ENCODE measurements at regions of chr10 and their contacts with region 1.

Region 1: GRCh38 chr10:126904819-126905686 is at the start of gene DOCK1:
- DNase-seq: no peak
- H3K4me3 ChIP-seq: peak within 1 kb of the TSS; percentile 92 to 96 (median 92)
- H3K27ac ChIP-seq: peak within 1 kb of the TSS; percentile 90 to 93 (median 92)
- H3K4me1 ChIP-seq: peaks cover 8 to 54% (median 22%) of the 10 kb centered on the region in 3 donors
- H3K27me3 ChIP-seq: no peaks in the 10 kb centered on the region
- CTCF ChIP-seq: no peak
- POLR2A ChIP-seq: peak in 3 of 4 donors; percentile 15 to 44 (median 16)
- total RNA-seq, gene DOCK1: 31.8 to 83.4 (median 49.8) TPM

Region 2: GRCh38 chr10:126749015-126749655 is 155.9 kb before region 1 on chr10:
- intact Hi-C with region 1: no loop called
- DNase-seq: no peak
- H3K4me3 ChIP-seq: no peak overlapping the region
- H3K27ac ChIP-seq: no peak overlapping the region
- H3K4me1 ChIP-seq: no peaks in the 10 kb centered on the region
- H3K27me3 ChIP-seq: no peaks in the 10 kb centered on the region
- CTCF ChIP-seq: peak; percentile 61 to 76 (median 69)
- POLR2A ChIP-seq: no peak

Region 3: DNA sequence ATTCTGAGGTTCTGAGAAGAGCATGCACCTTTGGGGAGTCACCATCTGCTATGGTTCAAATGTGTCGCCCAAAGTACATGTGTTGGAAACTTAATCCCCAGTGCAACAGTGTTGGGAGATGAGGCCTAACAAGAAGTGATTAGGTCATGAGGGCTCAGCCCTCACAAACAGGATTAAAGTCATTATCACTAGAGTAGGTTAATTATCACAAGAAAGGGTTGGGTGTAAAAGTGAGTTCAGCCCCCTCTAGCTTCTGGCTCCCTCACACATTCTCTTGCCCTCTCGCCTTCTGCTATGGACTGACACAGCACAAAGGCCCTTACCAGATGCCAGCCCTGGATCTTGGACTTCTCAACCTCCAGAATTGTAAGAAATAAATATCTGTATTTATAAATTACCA is 134.2 kb before region 1 on chr10:
- intact Hi-C with region 1: no loop called
- DNase-seq: no peak
- H3K4me3 ChIP-seq: no peak overlapping the region
- H3K27ac ChIP-seq: no peak overlapping the region
- H3K4me1 ChIP-seq: no peaks in the 10 kb centered on the region
- H3K27me3 ChIP-seq: no peaks in the 10 kb centered on the region
- CTCF ChIP-seq: no peak
- POLR2A ChIP-seq: no peak

Region 4: DNA sequence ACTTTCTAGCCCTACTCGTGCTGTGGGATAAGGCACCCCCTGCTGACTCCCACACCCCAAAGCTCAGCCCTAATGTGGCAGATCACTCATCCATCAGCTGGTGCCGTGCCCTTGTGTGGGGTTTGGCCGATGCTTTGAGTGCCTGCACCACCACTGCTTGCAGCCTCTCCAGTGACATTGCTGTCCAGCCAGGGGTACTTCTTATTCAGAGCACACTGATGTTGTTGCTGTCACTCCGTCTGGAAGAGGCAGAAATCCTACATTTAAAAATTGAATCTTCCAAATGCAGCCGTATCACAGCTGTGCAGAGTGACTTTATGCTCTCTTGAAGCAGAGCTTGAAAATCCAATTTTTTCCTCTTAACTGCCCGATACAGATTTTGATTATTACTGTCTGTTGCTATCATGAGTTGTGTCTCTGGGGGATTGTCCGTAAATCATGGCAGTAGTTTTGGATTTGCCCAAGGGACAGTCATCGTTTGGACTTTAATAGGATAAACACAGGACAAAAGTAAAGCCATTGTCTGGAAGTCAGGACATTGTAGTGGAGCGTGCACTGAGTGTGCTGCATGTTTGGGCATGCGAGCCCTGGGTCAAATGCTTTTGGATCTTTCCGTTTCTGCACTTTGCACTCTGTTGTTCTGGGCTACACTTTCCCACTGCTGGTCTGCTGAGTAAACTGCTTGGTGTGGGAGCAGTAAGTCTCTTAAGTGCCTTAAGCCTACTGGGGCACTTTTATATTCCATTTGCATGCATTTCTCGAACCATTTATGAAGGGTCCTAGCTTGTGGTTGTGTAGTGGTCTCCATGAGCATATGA is 128.4 kb after region 1 on chr10:
- intact Hi-C with region 1: loop called (anchors 10 kb)
- DNase-seq: no peak
- H3K4me3 ChIP-seq: no peak overlapping the region
- H3K27ac ChIP-seq: no peak overlapping the region
- H3K4me1 ChIP-seq: peaks cover 0 to 10% (median 0%) of the 10 kb centered on the region in 3 donors
- H3K27me3 ChIP-seq: no peaks in the 10 kb centered on the region
- CTCF ChIP-seq: no peak
- POLR2A ChIP-seq: no peak

Measured in esophagus squamous epithelium (tissue), 5 donors.